HEK293 (cell line): ENCODE measurements at regions of chr18 and their contacts with region 1.

Region 1: GRCh38 chr18:78875268-78875997 is 104.2 kb upstream of the SALL3 start:
- H3K4me3 ChIP-seq: no peak overlapping the region
- H3K27ac ChIP-seq: no peak overlapping the region
- H3K4me1 ChIP-seq: no peaks in the 10 kb centered on the region
- CTCF ChIP-seq: peak; percentile 28; the same call in 1 of the 2 replicates

Region 2: GRCh38 chr18:78448106-78448505 is 427.3 kb before region 1 on chr18:
- CTCF ChIA-PET with region 1: no interaction called
- POLR2A ChIA-PET with region 1: no interaction called
- H3K4me3 ChIP-seq: no peak overlapping the region
- H3K27ac ChIP-seq: no peak overlapping the region
- H3K4me1 ChIP-seq: no peaks in the 10 kb centered on the region
- CTCF ChIP-seq: no peak

Region 3: DNA sequence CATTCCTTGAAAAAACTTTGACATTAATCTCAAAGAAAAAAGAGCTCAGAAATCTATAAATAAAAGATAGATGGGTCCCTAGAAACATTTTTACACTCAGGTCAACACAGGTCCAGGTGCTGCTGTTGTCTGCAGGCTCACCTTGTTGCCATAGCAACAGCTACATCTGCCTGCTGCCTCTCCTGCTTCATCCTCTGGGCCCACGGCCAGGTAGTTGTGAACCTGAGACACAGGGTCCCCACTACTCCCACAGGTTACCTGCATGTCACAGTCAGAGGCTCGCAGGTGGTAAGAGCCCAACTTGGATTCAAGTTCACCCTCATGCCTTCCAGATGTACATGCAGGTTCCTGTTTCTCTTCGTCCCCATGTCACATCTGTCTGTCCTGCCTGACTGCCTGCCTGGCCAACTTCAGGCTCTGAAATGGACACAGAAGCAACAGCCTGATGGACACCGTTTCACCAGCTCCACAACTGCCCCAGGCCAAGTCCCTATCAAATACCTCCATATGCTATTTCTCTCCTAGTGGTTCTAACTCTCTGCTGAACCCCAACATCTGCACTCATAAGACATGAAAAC is 15.8 kb after region 1 on chr18:
- CTCF ChIA-PET with region 1: interaction called, 23 read pairs
- POLR2A ChIA-PET with region 1: no interaction called
- H3K4me3 ChIP-seq: no peak overlapping the region
- H3K27ac ChIP-seq: no peak overlapping the region
- H3K4me1 ChIP-seq: no peaks in the 10 kb centered on the region
- CTCF ChIP-seq: no peak

Region 4: GRCh38 chr18:78896111-78896905 is 20.9 kb after region 1 on chr18:
- CTCF ChIA-PET with region 1: interaction called, 15 read pairs
- POLR2A ChIA-PET with region 1: no interaction called
- H3K4me3 ChIP-seq: no peak overlapping the region
- H3K27ac ChIP-seq: no peak overlapping the region
- H3K4me1 ChIP-seq: no peaks in the 10 kb centered on the region
- CTCF ChIP-seq: no peak